A549 (cell line): ENCODE measurements at regions of chr12 and their contacts with region 1.

Region 1: DNA sequence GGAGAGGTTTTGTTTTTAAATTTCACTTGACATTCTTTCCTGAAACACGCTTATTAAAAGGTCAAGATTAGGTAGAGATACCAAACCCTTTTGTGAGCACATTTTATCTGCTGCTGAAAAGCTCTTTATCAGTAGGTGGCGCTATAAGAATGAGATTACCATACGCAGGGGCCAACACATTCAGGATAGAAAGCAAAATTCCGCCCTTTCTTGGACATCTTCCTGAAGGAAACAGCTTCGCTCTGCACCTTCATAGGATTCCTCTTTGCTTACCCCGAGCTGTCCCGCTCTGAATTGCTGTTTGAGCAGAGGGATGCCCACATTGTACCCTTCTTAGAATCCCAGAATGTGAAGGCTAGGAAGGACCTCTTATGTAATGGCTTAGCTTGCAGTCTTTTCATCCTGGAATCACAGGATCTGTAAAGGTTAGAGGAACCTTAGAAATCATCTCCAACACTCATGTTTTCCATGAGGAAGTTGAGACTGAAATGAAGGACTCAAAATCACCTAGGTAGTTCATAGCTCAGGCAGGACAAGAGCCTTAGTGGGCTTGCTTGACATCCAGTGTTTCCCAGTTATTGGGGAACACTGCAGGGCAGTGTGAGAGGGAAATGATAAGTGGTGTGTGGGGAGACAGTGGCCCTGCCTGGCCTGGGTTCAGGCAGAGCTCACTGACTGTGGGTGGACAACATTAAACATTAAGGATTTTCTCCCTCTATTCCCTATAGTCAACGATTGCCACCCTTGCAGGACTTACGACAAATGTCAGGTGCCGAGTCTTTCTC is 38.7 kb upstream of the CRY1 start:
- DNase-seq: peak; percentile 72 to 76
- ATAC-seq: peak; percentile 75 to 91
- H3K4me3 ChIP-seq: no peak overlapping the region
- H3K27ac ChIP-seq: peak overlapping the region; percentile 55 to 62; a peak in 5 of 6 replicates
- H3K4me1 ChIP-seq: 0 out of 3 replicates have a peak, but pooled peaks cover 4% of the 10 kb centered on the region
- CTCF ChIP-seq: peak; percentile 97
- EP300 ChIP-seq: no peak
- POLR2A ChIP-seq: no peak
- RAD21 ChIP-seq: peak; percentile 97 to 99

Region 2: DNA sequence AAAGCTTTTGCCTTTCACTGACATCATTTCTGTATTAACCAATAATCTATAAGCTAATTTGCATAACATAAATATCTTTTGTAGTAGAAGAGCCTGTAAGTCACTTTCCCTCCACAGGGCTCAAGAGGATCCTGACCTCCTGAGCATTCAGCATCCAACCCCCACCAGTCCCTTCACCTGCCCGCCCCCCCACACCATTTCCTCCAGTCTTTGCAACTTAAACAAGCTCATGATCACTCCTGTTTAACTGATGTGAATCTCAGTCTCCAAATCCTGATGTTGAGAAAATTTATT is 26.7 kb before region 1 on chr12:
- CTCF ChIA-PET with region 1: interaction called, 10 read pairs
- POLR2A ChIA-PET with region 1: no interaction called
- DNase-seq: no peak
- ATAC-seq: peak; percentile 60; a peak in 4 of 6 replicates
- H3K4me3 ChIP-seq: no peak overlapping the region
- H3K27ac ChIP-seq: no peak overlapping the region
- H3K4me1 ChIP-seq: 0 out of 3 replicates have a peak, but pooled peaks cover 4% of the 10 kb centered on the region
- CTCF ChIP-seq: no peak
- EP300 ChIP-seq: no peak
- POLR2A ChIP-seq: no peak
- RAD21 ChIP-seq: no peak

Region 3: DNA sequence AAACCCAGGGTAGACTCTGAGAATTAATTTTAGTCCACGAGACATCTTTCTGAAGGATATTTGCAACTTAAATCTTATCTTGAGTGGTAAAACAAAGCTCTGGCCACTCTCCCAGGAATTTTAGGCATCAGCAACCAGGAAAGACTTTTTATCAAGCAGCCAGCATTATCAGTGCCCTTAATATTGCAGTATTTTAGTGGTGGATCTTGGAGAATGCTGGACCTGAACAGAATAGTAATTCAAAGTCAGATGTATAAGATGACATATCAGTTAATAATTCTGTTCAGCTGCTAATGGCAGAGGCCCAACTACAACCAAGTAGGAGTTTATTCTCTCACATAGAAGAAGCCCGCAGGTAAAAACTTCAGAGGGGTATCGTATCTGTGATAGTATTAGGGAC is 20.3 kb after region 1 on chr12:
- CTCF ChIA-PET with region 1: interaction called, 44 read pairs
- POLR2A ChIA-PET with region 1: no interaction called
- DNase-seq: no peak
- ATAC-seq: no peak
- H3K4me3 ChIP-seq: no peak overlapping the region
- H3K27ac ChIP-seq: no peak overlapping the region
- H3K4me1 ChIP-seq: no peaks in the 10 kb centered on the region
- CTCF ChIP-seq: no peak
- EP300 ChIP-seq: no peak
- POLR2A ChIP-seq: no peak
- RAD21 ChIP-seq: no peak

Region 4: GRCh38 chr12:107296681-107297089 is 164.7 kb after region 1 on chr12:
- CTCF ChIA-PET with region 1: interaction called, 23 read pairs
- POLR2A ChIA-PET with region 1: no interaction called
- DNase-seq: peak; percentile 26 to 69
- ATAC-seq: peak; percentile 71 to 78
- H3K4me3 ChIP-seq: no peak overlapping the region
- H3K27ac ChIP-seq: peak overlapping the region in 1 of 2 experiments; percentile 63; a peak in 4 of 6 replicates
- H3K4me1 ChIP-seq: peaks cover 19% of the 10 kb centered on the region
- CTCF ChIP-seq: no peak
- EP300 ChIP-seq: no peak
- POLR2A ChIP-seq: no peak
- RAD21 ChIP-seq: no peak

Region 5: DNA sequence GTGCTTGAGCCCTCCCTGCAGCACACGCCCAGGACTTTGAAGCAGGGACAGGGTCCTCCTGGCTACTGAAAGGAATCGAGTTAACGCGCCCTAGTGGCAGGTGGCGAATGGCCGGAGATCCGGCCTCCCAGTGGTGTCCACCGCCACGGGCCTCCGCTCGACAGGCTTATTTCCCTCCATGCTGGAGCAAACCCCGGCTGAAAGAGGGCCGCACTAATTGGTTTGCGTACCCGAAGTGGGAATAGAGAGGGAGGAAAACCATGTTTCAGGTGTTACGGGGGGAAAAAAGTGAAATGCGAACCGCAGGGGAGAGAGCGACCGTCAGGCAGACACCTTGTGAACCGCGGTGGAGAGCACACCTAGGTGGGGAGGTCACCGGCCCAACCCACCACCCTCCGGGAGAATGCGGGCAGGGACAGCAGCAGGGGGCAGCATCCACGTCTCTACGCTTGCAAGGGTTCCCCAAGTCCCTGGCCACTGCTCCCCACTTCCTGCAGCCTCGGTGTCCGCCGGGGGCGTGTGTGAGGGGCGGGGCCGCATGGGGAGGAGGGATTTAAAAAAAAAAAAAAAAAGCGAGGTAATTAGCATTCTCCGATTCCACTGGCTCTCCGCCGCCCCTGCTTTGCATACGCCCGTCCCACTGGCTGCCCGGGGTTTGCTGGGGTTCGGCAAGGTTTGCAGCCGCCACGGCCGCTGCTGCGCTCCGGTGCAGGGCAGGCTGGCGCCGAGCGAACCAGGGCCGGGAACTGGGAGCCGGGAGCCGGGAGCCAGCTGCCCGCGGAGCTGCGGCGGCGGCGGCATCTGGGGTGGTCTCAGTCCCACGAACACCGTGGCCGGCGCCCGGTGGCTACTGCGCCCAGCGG is 186.0 kb after region 1 on chr12:
- CTCF ChIA-PET with region 1: interaction called, 128 read pairs
- POLR2A ChIA-PET with region 1: no interaction called
- DNase-seq: peak; percentile 91 to 95
- ATAC-seq: peak; percentile 75 to 90
- H3K4me3 ChIP-seq: peak overlapping the region; percentile 88
- H3K27ac ChIP-seq: peak overlapping the region; percentile 85 to 94
- H3K4me1 ChIP-seq: peaks cover 19% of the 10 kb centered on the region; the same call in 2 of the 3 replicates
- CTCF ChIP-seq: peak; percentile 60
- EP300 ChIP-seq: no peak
- POLR2A ChIP-seq: peak; percentile 86
- RAD21 ChIP-seq: peak; percentile 62 to 68

Region 6: DNA sequence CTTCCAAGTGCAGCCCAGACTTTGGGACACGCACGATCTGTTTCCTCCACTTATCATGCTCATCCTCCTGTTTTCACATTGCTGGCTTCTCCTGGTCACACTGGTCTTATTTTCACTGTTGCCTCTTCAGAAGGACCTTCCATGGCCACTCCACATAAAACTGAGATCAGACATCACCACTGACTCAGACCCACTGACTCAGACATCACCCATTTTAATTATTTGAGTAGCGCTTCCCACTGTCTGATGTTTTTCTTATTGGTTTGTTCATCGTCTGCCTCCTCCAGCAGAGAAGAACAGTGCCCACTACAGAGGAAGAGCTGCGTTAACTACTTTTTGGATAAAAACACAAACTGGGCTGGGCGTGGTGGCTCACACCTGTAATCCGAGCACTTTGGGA is 283.0 kb after region 1 on chr12:
- CTCF ChIA-PET with region 1: interaction called, 217 read pairs
- POLR2A ChIA-PET with region 1: no interaction called
- DNase-seq: peak; percentile 63 to 67
- ATAC-seq: peak; percentile 66 to 83
- H3K4me3 ChIP-seq: no peak overlapping the region
- H3K27ac ChIP-seq: peak overlapping the region; percentile 53 to 77
- H3K4me1 ChIP-seq: peaks cover 56% of the 10 kb centered on the region
- CTCF ChIP-seq: no peak
- EP300 ChIP-seq: no peak
- POLR2A ChIP-seq: no peak
- RAD21 ChIP-seq: peak; percentile 26 to 47; a peak in 3 of 5 replicates

Region 7: GRCh38 chr12:107607464-107608392 is 475.7 kb after region 1 on chr12:
- CTCF ChIA-PET with region 1: interaction called, 419 read pairs
- POLR2A ChIA-PET with region 1: no interaction called
- DNase-seq: peak; percentile 83 to 86
- ATAC-seq: peak; percentile 78 to 95
- H3K4me3 ChIP-seq: no peak overlapping the region
- H3K27ac ChIP-seq: peak overlapping the region; percentile 6 to 18; a peak in 1 of 6 replicates
- H3K4me1 ChIP-seq: no peaks in the 10 kb centered on the region
- CTCF ChIP-seq: peak; percentile 90
- EP300 ChIP-seq: no peak
- POLR2A ChIP-seq: no peak
- RAD21 ChIP-seq: peak; percentile 95 to 96